ENCODE measurements at regions of chr3 and their contacts with region 1.

Region 1: GRCh38 chr3:12891985-12892839 is 50.8 kb upstream of the RPL32 start:
- DNase-seq: peak; percentile 45
- H3K4me3 Mint-ChIP-seq: peak overlapping the region; percentile 11
- H3K27ac Mint-ChIP-seq: no peak overlapping the region
- H3K4me1 Mint-ChIP-seq: peaks cover 9% of the 10 kb centered on the region
- H3K27me3 Mint-ChIP-seq: peaks cover 59% of the 10 kb centered on the region
- CTCF ChIP-seq: peak; percentile 82

Region 2: GRCh38 chr3:12706504-12707253 is 185.5 kb before region 1 on chr3:
- CTCF ChIA-PET with region 1: no interaction called
- intact Hi-C with region 1: loop called (anchors 5 kb)
- DNase-seq: peak; percentile 67
- H3K4me3 Mint-ChIP-seq: no peak overlapping the region
- H3K27ac Mint-ChIP-seq: no peak overlapping the region
- H3K4me1 Mint-ChIP-seq: peaks cover 11% of the 10 kb centered on the region
- H3K27me3 Mint-ChIP-seq: peaks cover 44% of the 10 kb centered on the region
- CTCF ChIP-seq: peak; percentile 46

Region 3: GRCh38 chr3:12822725-12823373 is 69.4 kb before region 1 on chr3:
- CTCF ChIA-PET with region 1: interaction called, 3 read pairs
- intact Hi-C with region 1: loop called (anchors 5 kb)
- DNase-seq: no peak
- H3K4me3 Mint-ChIP-seq: no peak overlapping the region
- H3K27ac Mint-ChIP-seq: no peak overlapping the region
- H3K4me1 Mint-ChIP-seq: peaks cover 8% of the 10 kb centered on the region
- H3K27me3 Mint-ChIP-seq: no peaks in the 10 kb centered on the region
- CTCF ChIP-seq: peak; percentile 1

Measured in Calu3 (cell line).